B cell (primary cell): ENCODE measurements at regions of chr15 and their contacts with region 1.

Region 1: GRCh38 chr15:63752075-63752684 is 81.6 kb downstream of the HERC1 start:
- DNase-seq: peak; percentile 76
- ATAC-seq: peak; percentile 76
- H3K4me3 ChIP-seq: no peak overlapping the region
- H3K4me3 Mint-ChIP-seq: no peak overlapping the region
- H3K27ac ChIP-seq: peak overlapping the region in 1 of 2 donors; percentile 75
- H3K27ac Mint-ChIP-seq: peak overlapping the region; percentile 38
- H3K4me1 ChIP-seq: peaks cover 0 to 4% of the 10 kb centered on the region in 2 donors
- H3K4me1 Mint-ChIP-seq: peaks cover 7% of the 10 kb centered on the region
- H3K27me3 ChIP-seq: no peaks in the 10 kb centered on the region
- H3K27me3 Mint-ChIP-seq: no peaks in the 10 kb centered on the region
- CTCF ChIP-seq: peak; percentile 89

Region 2: GRCh38 chr15:63553388-63553791 is 198.8 kb before region 1 on chr15:
- CTCF ChIA-PET with region 1: no interaction called
- POLR2A ChIA-PET with region 1: no interaction called
- intact Hi-C with region 1: no loop called
- DNase-seq: no peak
- ATAC-seq: no peak
- H3K4me3 ChIP-seq: no peak overlapping the region
- H3K4me3 Mint-ChIP-seq: no peak overlapping the region
- H3K27ac ChIP-seq: peak overlapping the region in 1 of 2 donors; percentile 56
- H3K27ac Mint-ChIP-seq: peak overlapping the region; percentile 74
- H3K4me1 ChIP-seq: no peaks in the 10 kb centered on the region
- H3K4me1 Mint-ChIP-seq: peaks cover 14% of the 10 kb centered on the region
- H3K27me3 ChIP-seq: no peaks in the 10 kb centered on the region
- H3K27me3 Mint-ChIP-seq: no peaks in the 10 kb centered on the region
- CTCF ChIP-seq: no peak

Region 3: DNA sequence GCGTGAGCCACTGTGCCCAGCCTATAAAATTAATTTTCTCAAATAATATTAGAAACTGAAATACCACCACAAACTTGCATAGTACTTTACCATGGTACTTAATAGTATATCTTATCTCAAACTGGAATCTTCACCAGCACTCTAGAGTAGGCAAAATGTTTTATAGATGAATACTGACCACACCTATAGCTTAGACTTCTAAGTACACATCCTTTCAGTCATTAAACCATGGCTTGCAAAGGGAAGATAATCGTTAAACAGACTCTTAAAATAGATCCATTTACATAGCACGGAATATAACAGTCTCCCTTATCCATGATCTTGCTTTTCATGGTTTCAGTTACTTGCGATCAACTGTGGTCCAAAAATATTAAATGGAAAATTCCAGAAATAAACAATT is 30.0 kb before region 1 on chr15:
- CTCF ChIA-PET with region 1: no interaction called
- POLR2A ChIA-PET with region 1: no interaction called
- intact Hi-C with region 1: no loop called
- DNase-seq: no peak
- ATAC-seq: no peak
- H3K4me3 ChIP-seq: no peak overlapping the region
- H3K4me3 Mint-ChIP-seq: no peak overlapping the region
- H3K27ac ChIP-seq: no peak overlapping the region
- H3K27ac Mint-ChIP-seq: no peak overlapping the region
- H3K4me1 ChIP-seq: no peaks in the 10 kb centered on the region
- H3K4me1 Mint-ChIP-seq: no peaks in the 10 kb centered on the region
- H3K27me3 ChIP-seq: no peaks in the 10 kb centered on the region
- H3K27me3 Mint-ChIP-seq: no peaks in the 10 kb centered on the region
- CTCF ChIP-seq: no peak

Region 4: GRCh38 chr15:63805993-63806980 is 54.1 kb after region 1 on chr15:
- CTCF ChIA-PET with region 1: interaction called, 15 read pairs
- POLR2A ChIA-PET with region 1: interaction called, 6 read pairs
- intact Hi-C with region 1: loop called (anchors 10 kb)
- DNase-seq: peak; percentile 56
- ATAC-seq: peak; percentile 66
- H3K4me3 ChIP-seq: peak overlapping the region in 1 of 5 experiments; percentile 26
- H3K4me3 Mint-ChIP-seq: peak overlapping the region; percentile 35
- H3K27ac ChIP-seq: peak overlapping the region; percentile 62 to 74
- H3K27ac Mint-ChIP-seq: peak overlapping the region; percentile 71
- H3K4me1 ChIP-seq: peaks cover 48 to 62% of the 10 kb centered on the region in 2 donors
- H3K4me1 Mint-ChIP-seq: peaks cover 80% of the 10 kb centered on the region
- H3K27me3 ChIP-seq: no peaks in the 10 kb centered on the region
- H3K27me3 Mint-ChIP-seq: no peaks in the 10 kb centered on the region
- CTCF ChIP-seq: no peak

Region 5: GRCh38 chr15:63860155-63860554 is 108.0 kb after region 1 on chr15:
- CTCF ChIA-PET with region 1: interaction called, 30 read pairs
- POLR2A ChIA-PET with region 1: no interaction called
- intact Hi-C with region 1: no loop called
- DNase-seq: peak; percentile 73
- ATAC-seq: peak; percentile 95
- H3K4me3 ChIP-seq: peak overlapping the region in 1 of 5 experiments; percentile 24
- H3K4me3 Mint-ChIP-seq: peak overlapping the region; percentile 52
- H3K27ac ChIP-seq: peak overlapping the region; percentile 71 to 76
- H3K27ac Mint-ChIP-seq: peak overlapping the region; percentile 89
- H3K4me1 ChIP-seq: peaks cover 31 to 32% of the 10 kb centered on the region in 2 donors
- H3K4me1 Mint-ChIP-seq: peaks cover 31% of the 10 kb centered on the region
- H3K27me3 ChIP-seq: no peaks in the 10 kb centered on the region
- H3K27me3 Mint-ChIP-seq: no peaks in the 10 kb centered on the region
- CTCF ChIP-seq: no peak

Region 6: GRCh38 chr15:63905131-63905530 is 153.0 kb after region 1 on chr15:
- CTCF ChIA-PET with region 1: interaction called, 11 read pairs
- POLR2A ChIA-PET with region 1: no interaction called
- intact Hi-C with region 1: no loop called
- DNase-seq: no peak
- ATAC-seq: no peak
- H3K4me3 ChIP-seq: no peak overlapping the region
- H3K4me3 Mint-ChIP-seq: no peak overlapping the region
- H3K27ac ChIP-seq: no peak overlapping the region
- H3K27ac Mint-ChIP-seq: no peak overlapping the region
- H3K4me1 ChIP-seq: peaks cover 21 to 31% of the 10 kb centered on the region in 2 donors
- H3K4me1 Mint-ChIP-seq: peaks cover 37% of the 10 kb centered on the region
- H3K27me3 ChIP-seq: no peaks in the 10 kb centered on the region
- H3K27me3 Mint-ChIP-seq: no peaks in the 10 kb centered on the region
- CTCF ChIP-seq: no peak

Region 7: GRCh38 chr15:64010719-64011118 is 258.5 kb after region 1 on chr15:
- CTCF ChIA-PET with region 1: interaction called, 145 read pairs
- POLR2A ChIA-PET with region 1: interaction called, 3 read pairs
- intact Hi-C with region 1: loop called (anchors 1 kb)
- DNase-seq: peak; percentile 93
- ATAC-seq: peak; percentile 97
- H3K4me3 ChIP-seq: peak overlapping the region in 2 of 5 experiments; percentile 8 to 47
- H3K4me3 Mint-ChIP-seq: peak overlapping the region; percentile 87
- H3K27ac ChIP-seq: peak overlapping the region; percentile 63 to 77
- H3K27ac Mint-ChIP-seq: peak overlapping the region; percentile 97
- H3K4me1 ChIP-seq: peaks cover 27 to 36% of the 10 kb centered on the region in 2 donors
- H3K4me1 Mint-ChIP-seq: peaks cover 43% of the 10 kb centered on the region
- H3K27me3 ChIP-seq: no peaks in the 10 kb centered on the region
- H3K27me3 Mint-ChIP-seq: no peaks in the 10 kb centered on the region
- CTCF ChIP-seq: peak; percentile 51

Region 8: DNA sequence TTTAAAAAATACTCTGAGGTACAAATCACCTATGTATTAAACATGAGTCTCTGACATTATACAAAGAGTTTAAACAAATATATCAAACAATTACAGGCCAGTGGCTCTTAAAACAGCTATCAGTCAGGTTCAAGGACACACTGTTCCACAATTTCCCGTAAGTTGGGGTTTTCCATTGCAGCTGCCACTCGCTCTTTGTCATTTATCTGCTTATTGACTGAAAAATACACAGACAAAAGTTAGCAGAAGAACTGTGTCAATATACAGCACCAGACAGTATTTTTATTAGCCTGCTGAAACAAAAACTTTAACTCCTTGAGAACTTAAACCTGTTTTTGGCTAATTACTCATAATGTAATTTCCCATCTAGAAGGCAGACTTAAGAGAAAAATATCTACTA is 320.6 kb after region 1 on chr15:
- CTCF ChIA-PET with region 1: interaction called, 307 read pairs
- POLR2A ChIA-PET with region 1: no interaction called
- intact Hi-C with region 1: no loop called
- DNase-seq: no peak
- ATAC-seq: no peak
- H3K4me3 ChIP-seq: no peak overlapping the region
- H3K4me3 Mint-ChIP-seq: no peak overlapping the region
- H3K27ac ChIP-seq: peak overlapping the region in 1 of 2 donors; percentile 5
- H3K27ac Mint-ChIP-seq: no peak overlapping the region
- H3K4me1 ChIP-seq: peaks cover 18 to 20% of the 10 kb centered on the region in 2 donors
- H3K4me1 Mint-ChIP-seq: peaks cover 32% of the 10 kb centered on the region
- H3K27me3 ChIP-seq: no peaks in the 10 kb centered on the region
- H3K27me3 Mint-ChIP-seq: no peaks in the 10 kb centered on the region
- CTCF ChIP-seq: no peak